IMR-90 (cell line): ENCODE measurements at regions of chr6 and their contacts with region 1.

Region 1: DNA sequence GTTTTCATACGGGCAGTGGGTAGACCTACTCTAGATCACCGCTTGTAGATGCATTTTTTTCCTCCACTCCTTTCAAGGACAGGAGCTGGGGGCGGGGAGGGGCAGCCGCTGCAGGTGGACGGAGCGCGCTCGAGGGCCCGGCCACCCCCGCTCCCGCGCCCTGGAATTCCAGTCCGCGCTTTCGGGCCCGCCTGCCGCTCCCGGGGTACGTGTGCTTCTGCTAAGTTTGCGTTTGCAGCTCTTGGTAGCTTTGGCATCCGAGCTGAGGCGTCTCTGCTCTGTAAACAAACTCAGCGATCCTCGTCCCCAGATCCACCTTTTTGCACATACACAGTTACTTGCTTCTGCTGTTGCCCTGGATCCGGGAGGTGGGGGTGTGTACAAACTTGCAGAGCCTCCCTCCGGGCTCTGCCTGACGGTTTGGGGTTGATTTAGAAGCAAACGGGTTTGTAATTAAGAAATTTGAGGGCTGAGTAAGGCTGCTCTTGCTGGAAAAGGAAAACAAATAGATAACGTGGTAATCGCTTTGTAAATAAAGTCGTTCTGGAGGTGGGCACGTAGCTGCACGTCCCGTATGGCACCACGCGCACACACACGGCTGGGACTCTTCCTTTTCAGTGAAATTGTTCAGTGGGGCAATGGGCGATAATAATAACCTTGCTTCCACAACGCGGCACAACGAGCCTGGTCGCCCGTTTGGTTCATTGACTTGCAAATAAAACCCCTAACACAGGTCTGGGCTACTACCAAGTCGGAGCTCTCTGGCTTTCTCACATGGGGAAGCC is 976 bp upstream of the CITED2 start:
- DNase-seq: peak; percentile 98
- ATAC-seq: peak; percentile 61
- H3K4me3 ChIP-seq: peak overlapping the region; percentile 69
- H3K27ac ChIP-seq: peak overlapping the region; percentile 91
- H3K4me1 ChIP-seq: peaks cover 8% of the 10 kb centered on the region
- H3K27me3 ChIP-seq: no peaks in the 10 kb centered on the region
- CTCF ChIP-seq: peak; percentile 37
- POLR2A ChIP-seq: peak; percentile 59
- RAD21 ChIP-seq: peak; percentile 57

Region 2: DNA sequence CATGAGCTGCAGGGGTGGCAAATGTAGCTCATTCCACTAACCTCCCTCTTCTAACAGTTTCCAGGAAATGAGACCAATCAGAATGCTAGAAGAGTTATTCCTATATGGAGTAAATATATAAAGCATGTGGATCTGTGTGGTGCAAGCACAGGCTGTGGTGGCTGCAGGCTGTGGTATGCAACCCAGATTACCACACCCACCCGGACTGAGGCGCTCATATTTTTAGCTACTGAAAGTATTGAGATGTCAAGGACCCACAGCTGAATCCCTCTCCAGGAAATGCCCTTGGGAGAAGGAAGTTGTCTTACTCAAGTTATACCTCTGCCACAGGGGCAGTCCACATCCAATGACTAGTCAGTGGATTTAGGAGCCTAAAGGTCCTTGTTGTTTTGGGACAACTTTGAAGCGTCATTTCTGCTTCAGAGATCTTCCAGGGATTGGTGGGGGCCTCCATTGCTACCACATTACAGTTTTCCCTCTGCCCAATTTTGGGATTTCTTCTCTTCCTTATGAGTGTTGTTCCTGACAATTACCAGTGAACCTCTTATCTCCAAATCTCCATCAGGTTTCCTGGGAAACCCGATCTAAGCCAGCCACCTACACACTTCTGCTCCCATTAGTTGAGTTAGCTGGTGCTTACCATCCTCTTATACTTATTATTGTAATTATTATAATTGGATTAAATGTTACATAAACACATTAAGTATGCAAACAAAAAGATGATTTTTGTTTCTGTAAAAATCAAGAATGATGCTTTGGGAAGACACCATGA is 375.3 kb before region 1 on chr6:
- CTCF ChIA-PET with region 1: no interaction called
- POLR2A ChIA-PET with region 1: no interaction called
- dilution Hi-C with region 1: no loop called
- in situ Hi-C with region 1: no loop called
- intact Hi-C with region 1: no loop called
- DNase-seq: no peak
- ATAC-seq: peak; percentile 49
- H3K4me3 ChIP-seq: no peak overlapping the region
- H3K27ac ChIP-seq: no peak overlapping the region
- H3K4me1 ChIP-seq: no peaks in the 10 kb centered on the region
- H3K27me3 ChIP-seq: no peaks in the 10 kb centered on the region
- CTCF ChIP-seq: no peak
- POLR2A ChIP-seq: no peak
- RAD21 ChIP-seq: no peak

Region 3: GRCh38 chr6:139422105-139423036 is 46.9 kb after region 1 on chr6:
- CTCF ChIA-PET with region 1: no interaction called
- POLR2A ChIA-PET with region 1: no interaction called
- dilution Hi-C with region 1: no loop called
- in situ Hi-C with region 1: no loop called
- intact Hi-C with region 1: no loop called
- DNase-seq: no peak
- ATAC-seq: no peak
- H3K4me3 ChIP-seq: no peak overlapping the region
- H3K27ac ChIP-seq: no peak overlapping the region
- H3K4me1 ChIP-seq: no peaks in the 10 kb centered on the region
- H3K27me3 ChIP-seq: no peaks in the 10 kb centered on the region
- CTCF ChIP-seq: no peak
- POLR2A ChIP-seq: no peak
- RAD21 ChIP-seq: no peak

Region 4: DNA sequence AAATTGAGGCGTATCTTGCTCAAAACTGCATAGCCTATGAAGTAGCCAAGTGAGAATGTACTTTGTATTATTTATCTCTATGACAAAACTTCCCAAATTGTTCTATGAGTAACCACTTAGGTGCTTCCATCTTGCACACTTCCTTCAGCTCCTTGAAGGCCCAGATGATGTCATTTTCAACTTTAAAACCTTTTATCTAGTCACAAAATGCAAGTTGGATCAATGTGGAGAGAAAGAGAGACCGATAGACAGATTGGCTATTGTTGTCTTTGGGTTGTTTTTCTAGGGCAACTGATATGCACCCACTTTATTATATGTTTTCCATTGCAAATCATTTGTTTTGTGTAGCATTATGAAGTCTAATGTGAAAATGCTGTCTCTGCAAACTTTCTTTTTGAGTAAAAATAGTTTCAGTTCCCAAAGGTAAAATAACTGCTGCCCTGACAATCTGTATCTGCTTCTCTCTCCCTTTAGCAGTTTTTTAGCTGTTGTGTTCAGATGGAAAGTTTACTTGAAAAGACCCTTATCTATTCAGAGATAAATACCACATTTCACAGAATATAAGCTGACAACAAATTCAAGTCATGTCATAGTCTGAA is 72.7 kb after region 1 on chr6:
- CTCF ChIA-PET with region 1: no interaction called
- POLR2A ChIA-PET with region 1: no interaction called
- dilution Hi-C with region 1: no loop called
- in situ Hi-C with region 1: no loop called
- intact Hi-C with region 1: loop called (anchors 5 kb)
- DNase-seq: peak; percentile 63
- ATAC-seq: no peak
- H3K4me3 ChIP-seq: no peak overlapping the region
- H3K27ac ChIP-seq: no peak overlapping the region
- H3K4me1 ChIP-seq: peaks cover 2% of the 10 kb centered on the region; the same call in 1 of the 2 replicates
- H3K27me3 ChIP-seq: no peaks in the 10 kb centered on the region
- CTCF ChIP-seq: no peak
- POLR2A ChIP-seq: no peak
- RAD21 ChIP-seq: no peak

Region 5: DNA sequence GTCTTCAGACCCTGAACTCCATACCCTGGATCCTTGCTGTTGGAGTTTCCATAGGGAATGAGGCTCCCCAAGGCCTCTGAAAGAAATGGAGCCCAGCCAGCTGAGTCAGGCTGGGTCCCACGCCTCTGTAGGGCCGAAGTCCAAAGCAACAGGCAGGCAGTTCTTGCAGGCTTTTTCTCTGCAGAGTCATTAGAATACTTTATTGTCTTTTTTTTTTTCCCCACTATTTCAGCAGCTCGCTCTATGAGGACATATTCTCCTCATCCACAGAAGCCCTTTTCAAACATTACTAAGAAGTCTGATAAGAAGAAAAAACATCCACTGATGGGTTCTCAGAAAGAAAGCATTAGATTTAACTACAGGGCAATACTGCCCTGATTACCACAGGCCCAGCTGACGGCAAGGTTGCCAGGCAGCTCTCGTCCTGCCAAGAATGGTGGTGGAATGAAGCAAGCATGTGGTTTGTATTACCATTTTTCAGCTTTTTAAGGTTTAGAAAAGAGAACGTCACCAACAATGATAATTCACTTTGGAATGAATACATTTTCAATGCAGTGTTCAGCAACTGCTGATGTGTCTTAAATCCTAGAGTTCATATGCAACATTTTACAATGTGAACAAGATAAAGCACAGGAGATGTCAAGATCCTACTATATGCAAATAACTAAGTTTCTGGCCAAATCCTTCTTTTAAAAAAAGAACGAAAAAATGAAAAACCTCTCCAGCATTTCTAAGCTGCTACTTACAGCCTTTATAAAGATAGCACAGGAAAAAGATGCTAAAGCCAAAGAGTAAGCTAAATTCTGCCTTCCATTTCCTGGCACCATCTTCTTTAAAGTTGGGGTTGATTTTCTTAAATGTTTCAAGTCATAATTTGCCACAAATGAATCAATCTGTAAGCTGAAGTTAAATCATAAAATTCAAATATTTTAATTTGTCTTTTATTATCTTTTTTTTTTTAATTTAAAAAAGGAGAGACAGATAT is 222.6 kb after region 1 on chr6:
- CTCF ChIA-PET with region 1: no interaction called
- POLR2A ChIA-PET with region 1: interaction called, 12 read pairs
- dilution Hi-C with region 1: no loop called
- in situ Hi-C with region 1: loop called (anchors 5 kb)
- intact Hi-C with region 1: loop called (anchors 1 kb)
- DNase-seq: peak; percentile 98
- ATAC-seq: peak; percentile 91
- H3K4me3 ChIP-seq: no peak overlapping the region
- H3K27ac ChIP-seq: peak overlapping the region; percentile 95
- H3K4me1 ChIP-seq: peaks cover 10% of the 10 kb centered on the region
- H3K27me3 ChIP-seq: no peaks in the 10 kb centered on the region
- CTCF ChIP-seq: no peak
- POLR2A ChIP-seq: no peak; the same call in 1 of the 2 replicates
- RAD21 ChIP-seq: peak; percentile 16; the same call in 1 of the 2 replicates

Region 6: DNA sequence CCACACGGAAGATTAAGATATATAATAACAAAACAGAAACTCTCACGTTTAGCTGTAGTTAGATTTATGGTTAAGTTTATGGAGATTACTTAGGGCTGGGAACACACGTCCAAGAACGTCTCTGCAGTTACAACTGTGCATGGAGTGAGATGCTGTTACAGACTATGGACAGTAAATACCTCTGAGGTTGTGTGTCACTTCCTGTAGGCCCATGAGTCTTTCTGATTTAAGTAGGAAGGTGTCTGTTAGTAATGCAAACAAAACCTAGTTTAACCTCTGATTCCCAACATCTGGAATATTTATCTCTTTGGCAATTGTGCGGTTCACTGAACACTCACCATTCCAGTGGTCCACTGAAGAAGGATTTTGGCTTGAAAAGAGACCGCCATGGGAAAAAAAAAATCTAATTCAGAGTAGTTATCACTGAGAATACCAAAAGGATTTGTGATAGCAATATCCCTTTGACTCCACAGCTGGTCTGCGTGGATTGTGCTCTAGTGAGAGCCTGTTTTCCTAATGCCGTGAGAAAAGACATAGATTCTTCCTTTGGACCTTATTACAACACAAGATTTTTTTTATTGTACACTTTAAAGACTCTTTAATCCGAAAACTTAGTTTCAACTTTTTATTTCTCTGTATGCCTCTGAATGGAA is 477.2 kb after region 1 on chr6:
- CTCF ChIA-PET with region 1: interaction called, 3 read pairs
- POLR2A ChIA-PET with region 1: interaction called, 22 read pairs
- dilution Hi-C with region 1: no loop called
- in situ Hi-C with region 1: no loop called
- intact Hi-C with region 1: loop called (anchors 2 kb)
- DNase-seq: peak; percentile 93
- ATAC-seq: peak; percentile 69
- H3K4me3 ChIP-seq: no peak overlapping the region
- H3K27ac ChIP-seq: peak overlapping the region; percentile 23; the same call in 1 of the 2 replicates
- H3K4me1 ChIP-seq: peaks cover 11% of the 10 kb centered on the region
- H3K27me3 ChIP-seq: no peaks in the 10 kb centered on the region
- CTCF ChIP-seq: no peak
- POLR2A ChIP-seq: peak; percentile 55; the same call in 1 of the 2 replicates
- RAD21 ChIP-seq: no peak

Region 7: GRCh38 chr6:140062043-140063020 is 686.9 kb after region 1 on chr6:
- CTCF ChIA-PET with region 1: no interaction called
- POLR2A ChIA-PET with region 1: no interaction called
- dilution Hi-C with region 1: no loop called
- in situ Hi-C with region 1: no loop called
- intact Hi-C with region 1: loop called (anchors 2 kb)
- DNase-seq: peak; percentile 96
- ATAC-seq: peak; percentile 80
- H3K4me3 ChIP-seq: no peak overlapping the region
- H3K27ac ChIP-seq: peak overlapping the region; percentile 100
- H3K4me1 ChIP-seq: peaks cover 15% of the 10 kb centered on the region
- H3K27me3 ChIP-seq: no peaks in the 10 kb centered on the region
- CTCF ChIP-seq: no peak
- POLR2A ChIP-seq: no peak
- RAD21 ChIP-seq: 0 out of 2 replicates have a peak, but pooled peaks have one; percentile 15

Region 8: GRCh38 chr6:140623498-140623897 is 1248.1 kb after region 1 on chr6:
- CTCF ChIA-PET with region 1: no interaction called
- POLR2A ChIA-PET with region 1: no interaction called
- dilution Hi-C with region 1: no loop called
- in situ Hi-C with region 1: no loop called
- intact Hi-C with region 1: loop called (anchors 10 kb)
- DNase-seq: peak; percentile 93
- ATAC-seq: 0 out of 2 replicates have a peak, but pooled peaks have one; percentile 13
- H3K4me3 ChIP-seq: no peak overlapping the region
- H3K27ac ChIP-seq: peak overlapping the region; percentile 67; the same call in 1 of the 2 replicates
- H3K4me1 ChIP-seq: peaks cover 9% of the 10 kb centered on the region; the same call in 1 of the 2 replicates
- H3K27me3 ChIP-seq: no peaks in the 10 kb centered on the region
- CTCF ChIP-seq: no peak
- POLR2A ChIP-seq: no peak
- RAD21 ChIP-seq: no peak